ENCODE measurements at regions of chr1 and their contacts with region 1.

Region 1: GRCh38 chr1:2091611-2092604 is 41.7 kb downstream of the PRKCZ start:
- H3K4me3 Mint-ChIP-seq: no peak overlapping the region
- H3K27ac Mint-ChIP-seq: no peak overlapping the region
- H3K4me1 Mint-ChIP-seq: peaks cover 5% of the 10 kb centered on the region
- H3K27me3 Mint-ChIP-seq: peaks cover 4% of the 10 kb centered on the region

Region 2: GRCh38 chr1:2174348-2175054 is 82.6 kb after region 1 on chr1:
- intact Hi-C with region 1: loop called (anchors 10 kb)
- H3K4me3 Mint-ChIP-seq: peak overlapping the region; percentile 56
- H3K27ac Mint-ChIP-seq: peak overlapping the region; percentile 31
- H3K4me1 Mint-ChIP-seq: peaks cover 8% of the 10 kb centered on the region
- H3K27me3 Mint-ChIP-seq: peaks cover 9% of the 10 kb centered on the region

Measured in dendritic cell treated with granulocyte-macrophage colony-stimulating factor and Interleukin-4, amounts not matched to agents 40 ng/mL and 50 ng/mL, for 4 days (primary cell).